Endothelial cell of umbilical vein (primary cell): ENCODE measurements at regions of chr16 and their contacts with region 1.

Region 1: DNA sequence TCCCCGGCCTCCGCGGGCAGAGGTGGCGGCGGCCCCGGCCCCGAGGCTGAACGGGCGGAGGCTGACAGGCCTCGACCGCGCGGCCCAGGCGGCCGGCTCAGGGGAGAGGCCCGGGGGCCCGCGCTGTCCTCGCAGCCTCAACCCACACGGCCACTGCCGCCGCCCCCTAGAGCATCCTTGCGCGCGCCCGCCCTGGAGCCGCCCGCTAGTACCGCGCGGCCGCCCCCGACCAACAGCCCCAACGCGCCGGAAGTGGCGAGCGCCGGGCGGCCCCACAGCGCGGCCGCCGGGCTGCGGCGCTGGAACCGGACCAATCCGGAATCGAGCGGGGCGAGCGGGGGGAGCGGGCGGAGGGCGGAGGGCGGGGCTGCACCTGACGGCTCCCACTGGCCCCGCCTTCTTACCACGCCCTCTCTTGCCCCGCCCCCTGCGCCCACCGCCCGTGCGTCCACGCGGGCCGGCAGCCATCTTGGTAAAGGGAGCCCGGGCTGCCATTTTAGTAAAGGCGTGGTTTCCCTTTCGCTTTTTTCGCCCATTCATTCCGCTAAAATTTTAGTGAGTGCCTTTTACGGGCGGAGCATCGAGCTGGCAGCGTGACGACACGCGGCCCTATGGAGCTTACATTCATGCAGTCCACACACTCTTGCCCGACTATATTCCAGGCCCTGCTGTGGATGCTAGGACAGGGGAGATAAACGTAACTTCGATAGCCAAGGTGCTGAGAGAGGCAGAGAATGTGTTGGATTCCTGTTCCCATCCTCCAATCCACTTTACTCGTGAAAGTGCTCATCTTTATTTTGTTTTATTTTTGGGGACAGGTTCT is at the start of gene XPO6:
- DNase-seq: peak; percentile 91
- H3K4me3 ChIP-seq: peak within 1 kb of the TSS; percentile 40 to 90 (median 56)
- H3K27ac ChIP-seq: peak within 1 kb of the TSS; percentile 64
- H3K4me1 ChIP-seq: peaks cover 40% of the 10 kb centered on the region
- H3K27me3 ChIP-seq: no peaks in the 10 kb centered on the region
- CTCF ChIP-seq: no peak
- POLR2A ChIP-seq: peak; percentile 72
- total RNA-seq, gene XPO6: 154 and 170 TPM in 2 replicates

Region 2: GRCh38 chr16:28118636-28119035 is 93.3 kb before region 1 on chr16:
- CTCF ChIA-PET with region 1: no interaction called
- POLR2A ChIA-PET with region 1: no interaction called
- dilution Hi-C with region 1: no loop called
- intact Hi-C with region 1: no loop called
- DNase-seq: no peak
- H3K4me3 ChIP-seq: no peak overlapping the region
- H3K27ac ChIP-seq: no peak overlapping the region
- H3K4me1 ChIP-seq: no peaks in the 10 kb centered on the region
- H3K27me3 ChIP-seq: no peaks in the 10 kb centered on the region
- CTCF ChIP-seq: no peak
- POLR2A ChIP-seq: no peak

Region 3: GRCh38 chr16:28145796-28146195 is 66.1 kb before region 1 on chr16:
- CTCF ChIA-PET with region 1: interaction called, 3 read pairs
- POLR2A ChIA-PET with region 1: no interaction called
- dilution Hi-C with region 1: no loop called
- intact Hi-C with region 1: loop called (anchors 2 kb)
- DNase-seq: peak; percentile 15
- H3K4me3 ChIP-seq: no peak overlapping the region
- H3K27ac ChIP-seq: peak overlapping the region; percentile 24
- H3K4me1 ChIP-seq: peaks cover 53% of the 10 kb centered on the region
- H3K27me3 ChIP-seq: no peaks in the 10 kb centered on the region
- CTCF ChIP-seq: no peak
- POLR2A ChIP-seq: no peak

Region 4: GRCh38 chr16:28181515-28181914 is 30.4 kb before region 1 on chr16:
- CTCF ChIA-PET with region 1: interaction called, 4 read pairs
- POLR2A ChIA-PET with region 1: no interaction called
- dilution Hi-C with region 1: no loop called
- intact Hi-C with region 1: loop called (anchors 2 kb)
- DNase-seq: peak; percentile 82
- H3K4me3 ChIP-seq: no peak overlapping the region
- H3K27ac ChIP-seq: peak overlapping the region; percentile 62
- H3K4me1 ChIP-seq: peaks cover 22% of the 10 kb centered on the region
- H3K27me3 ChIP-seq: no peaks in the 10 kb centered on the region
- CTCF ChIP-seq: no peak
- POLR2A ChIP-seq: no peak

Region 5: GRCh38 chr16:28196331-28196987 is 15.5 kb before region 1 on chr16:
- CTCF ChIA-PET with region 1: interaction called, 8 read pairs
- POLR2A ChIA-PET with region 1: interaction called, 8 read pairs
- dilution Hi-C with region 1: no loop called
- intact Hi-C with region 1: loop called (anchors 2 kb)
- DNase-seq: no peak
- H3K4me3 ChIP-seq: no peak overlapping the region
- H3K27ac ChIP-seq: no peak overlapping the region
- H3K4me1 ChIP-seq: peaks cover 14% of the 10 kb centered on the region
- H3K27me3 ChIP-seq: no peaks in the 10 kb centered on the region
- CTCF ChIP-seq: no peak
- POLR2A ChIP-seq: no peak

Region 6: GRCh38 chr16:28237754-28238357 is 25.9 kb after region 1 on chr16:
- CTCF ChIA-PET with region 1: no interaction called
- POLR2A ChIA-PET with region 1: no interaction called
- dilution Hi-C with region 1: no loop called
- intact Hi-C with region 1: no loop called
- DNase-seq: no peak
- H3K4me3 ChIP-seq: no peak overlapping the region
- H3K27ac ChIP-seq: no peak overlapping the region
- H3K4me1 ChIP-seq: no peaks in the 10 kb centered on the region
- H3K27me3 ChIP-seq: no peaks in the 10 kb centered on the region
- CTCF ChIP-seq: no peak
- POLR2A ChIP-seq: no peak

Region 7: DNA sequence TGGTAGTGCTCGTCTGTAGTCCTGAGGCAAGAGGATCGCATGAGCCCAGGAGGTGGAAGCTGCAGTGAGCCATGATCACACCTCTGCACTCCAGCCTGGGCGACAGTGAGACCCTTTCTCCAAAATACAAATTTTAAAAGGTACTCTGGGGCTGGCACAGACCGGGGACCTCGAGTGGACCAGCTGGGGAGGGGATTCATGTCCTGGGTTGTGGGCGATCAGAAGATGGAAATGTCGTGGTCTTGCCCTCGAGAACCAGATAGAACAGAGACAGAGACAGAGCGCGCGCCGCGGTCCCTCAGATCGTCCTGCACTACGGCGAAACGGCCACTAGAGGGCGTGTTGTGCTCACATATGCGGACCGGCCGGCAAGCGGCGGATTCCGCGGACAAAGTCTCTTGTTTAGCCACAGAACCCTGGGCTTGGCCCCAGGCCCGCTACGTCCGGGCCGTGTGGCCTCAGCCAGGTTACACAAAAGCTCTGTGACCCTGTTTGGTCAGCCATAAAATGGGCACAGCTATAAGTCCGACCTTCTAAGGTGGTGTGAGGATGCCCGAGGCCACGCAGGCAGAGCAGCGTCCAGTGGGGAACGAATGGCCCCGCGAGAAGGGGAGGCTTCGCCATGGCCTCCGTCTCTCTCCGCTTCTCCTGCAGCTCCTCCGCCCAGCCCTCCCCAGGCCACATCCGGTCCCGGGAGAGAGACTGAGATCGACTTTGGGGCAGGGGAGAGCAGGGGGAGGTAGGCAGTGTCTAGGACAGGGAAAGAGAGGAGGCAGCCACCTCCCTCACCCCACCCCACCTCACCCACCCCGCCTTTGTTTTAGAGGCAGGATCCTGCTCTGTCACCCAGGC is 65.8 kb after region 1 on chr16:
- CTCF ChIA-PET with region 1: no interaction called
- POLR2A ChIA-PET with region 1: no interaction called
- dilution Hi-C with region 1: no loop called
- intact Hi-C with region 1: loop called (anchors 2 kb)
- DNase-seq: peak; percentile 74
- H3K4me3 ChIP-seq: peak overlapping the region in 2 of 3 experiments; percentile 18 to 35
- H3K27ac ChIP-seq: no peak overlapping the region
- H3K4me1 ChIP-seq: peaks cover 2% of the 10 kb centered on the region
- H3K27me3 ChIP-seq: peaks cover 0 to 2% of the 10 kb centered on the region in 2 experiments
- CTCF ChIP-seq: peak; percentile 91 to 95
- POLR2A ChIP-seq: no peak

Region 8: DNA sequence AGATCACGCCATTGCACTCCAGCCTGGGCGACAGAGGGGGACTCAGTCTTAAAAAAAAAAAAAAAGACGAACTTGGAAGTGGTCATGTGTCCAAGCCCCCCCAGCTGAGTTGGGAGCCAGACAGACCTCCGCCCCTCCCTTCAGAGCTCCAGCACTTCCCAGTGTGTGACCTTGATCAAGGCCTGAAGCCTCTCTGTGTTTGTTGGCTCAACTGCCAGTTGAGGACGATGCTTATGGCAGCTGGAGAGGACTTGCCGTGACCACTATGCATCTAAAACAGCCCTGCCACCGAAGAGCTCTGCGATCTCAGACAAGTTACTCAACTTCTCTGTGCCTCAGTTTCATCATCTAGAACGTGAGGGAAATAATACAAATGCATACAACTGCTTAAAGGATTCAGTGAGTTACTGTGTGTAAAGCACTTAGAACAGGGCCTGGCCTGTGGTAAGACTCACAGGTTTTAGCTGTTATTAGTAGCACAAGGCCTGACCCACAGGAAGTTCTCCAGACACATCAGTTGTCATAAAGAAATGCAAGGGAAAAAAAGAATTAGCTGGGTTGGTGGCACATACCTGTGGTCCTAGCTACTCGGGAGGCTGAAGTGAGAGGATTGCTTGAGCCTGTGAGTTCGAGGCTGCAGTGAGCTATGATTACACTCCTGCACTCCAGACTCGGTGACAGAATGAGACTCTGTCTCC is 301.7 kb after region 1 on chr16:
- CTCF ChIA-PET with region 1: no interaction called
- POLR2A ChIA-PET with region 1: no interaction called
- dilution Hi-C with region 1: no loop called
- intact Hi-C with region 1: no loop called
- DNase-seq: no peak
- H3K4me3 ChIP-seq: no peak overlapping the region
- H3K27ac ChIP-seq: no peak overlapping the region
- H3K4me1 ChIP-seq: no peaks in the 10 kb centered on the region
- H3K27me3 ChIP-seq: no peaks in the 10 kb centered on the region
- CTCF ChIP-seq: no peak
- POLR2A ChIP-seq: no peak